ENCODE measurements at regions of chr18 and their contacts with region 1.

Region 1: GRCh38 chr18:39494211-39494896 is 1928.8 kb upstream of the CELF4 start:
- DNase-seq: peak in 1 of 2 experiments; percentile 6
- H3K4me3 ChIP-seq: no peak overlapping the region
- H3K4me3 Mint-ChIP-seq: peak overlapping the region; percentile 38
- H3K27ac Mint-ChIP-seq: no peak overlapping the region
- H3K4me1 ChIP-seq: peaks cover 5% of the 10 kb centered on the region
- H3K4me1 Mint-ChIP-seq: no peaks in the 10 kb centered on the region
- H3K27me3 ChIP-seq: no peaks in the 10 kb centered on the region
- H3K27me3 Mint-ChIP-seq: no peaks in the 10 kb centered on the region
- CTCF ChIP-seq: no peak

Region 2: DNA sequence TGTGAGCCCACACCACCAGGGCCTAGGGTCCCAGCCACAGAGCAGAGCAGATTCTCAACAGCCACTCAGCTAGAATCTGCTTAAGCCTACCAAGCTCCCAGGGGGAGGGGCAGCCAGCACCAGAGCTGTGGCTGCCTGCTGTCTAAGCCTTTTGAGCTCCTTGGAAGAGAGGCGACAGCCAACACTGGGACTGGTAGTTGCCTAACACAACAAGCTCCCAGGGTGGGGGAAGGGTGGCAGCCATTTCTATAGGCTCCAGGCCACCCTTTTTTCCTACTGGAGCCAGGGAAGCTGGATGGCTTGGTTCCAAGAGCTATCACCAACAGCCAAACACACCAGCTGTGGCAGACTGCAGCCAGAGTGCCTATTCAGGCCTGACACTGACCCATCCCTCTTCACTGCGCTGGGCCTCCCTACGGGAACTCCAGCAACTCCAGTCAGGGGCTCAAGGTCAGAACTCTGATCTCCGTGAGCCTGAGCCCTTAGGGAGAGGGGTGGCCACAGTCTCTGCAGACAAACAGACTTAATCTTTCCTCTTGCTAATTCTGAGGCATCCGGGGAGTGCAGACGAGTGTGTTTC is 104.5 kb before region 1 on chr18:
- CTCF ChIA-PET with region 1: no interaction called
- POLR2A ChIA-PET with region 1: no interaction called
- intact Hi-C with region 1: no loop called
- DNase-seq: no peak
- H3K4me3 ChIP-seq: no peak overlapping the region
- H3K4me3 Mint-ChIP-seq: no peak overlapping the region
- H3K27ac Mint-ChIP-seq: no peak overlapping the region
- H3K4me1 ChIP-seq: no peaks in the 10 kb centered on the region
- H3K4me1 Mint-ChIP-seq: no peaks in the 10 kb centered on the region
- H3K27me3 ChIP-seq: no peaks in the 10 kb centered on the region
- H3K27me3 Mint-ChIP-seq: no peaks in the 10 kb centered on the region
- CTCF ChIP-seq: no peak

Region 3: DNA sequence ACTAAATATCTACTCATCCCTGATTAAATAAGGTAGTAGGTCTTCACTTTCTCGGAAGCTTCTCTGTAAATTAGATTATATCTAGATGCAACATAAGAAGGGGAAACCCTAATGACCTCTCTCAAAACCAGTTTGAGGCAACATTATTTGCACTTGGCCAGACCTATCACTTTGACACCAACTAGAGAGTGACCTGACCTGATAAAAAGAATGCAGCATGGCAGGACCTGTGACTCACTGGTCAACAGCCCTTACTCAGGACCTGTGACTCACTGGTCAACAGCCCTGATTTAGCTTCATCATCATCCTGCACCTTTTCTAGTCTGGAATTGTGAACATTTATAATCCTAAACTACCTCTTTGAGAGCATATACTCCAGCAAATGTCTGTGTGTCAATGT is 28.9 kb after region 1 on chr18:
- CTCF ChIA-PET with region 1: no interaction called
- POLR2A ChIA-PET with region 1: no interaction called
- intact Hi-C with region 1: loop called (anchors 2 kb)
- DNase-seq: peak; percentile 42 to 52
- H3K4me3 ChIP-seq: no peak overlapping the region
- H3K4me3 Mint-ChIP-seq: no peak overlapping the region
- H3K27ac Mint-ChIP-seq: peak overlapping the region; percentile 38
- H3K4me1 ChIP-seq: peaks cover 16% of the 10 kb centered on the region
- H3K4me1 Mint-ChIP-seq: peaks cover 7% of the 10 kb centered on the region
- H3K27me3 ChIP-seq: no peaks in the 10 kb centered on the region
- H3K27me3 Mint-ChIP-seq: no peaks in the 10 kb centered on the region
- CTCF ChIP-seq: no peak